CD4-positive, alpha-beta T cell (primary cell): ENCODE measurements at regions of chr1 and their contacts with region 1.

Region 1: GRCh38 chr1:40338745-40339424 is 21.8 kb upstream of the COL9A2 start:
- DNase-seq: peak; percentile 83 to 94 (median 89)
- ATAC-seq: peak; percentile 99
- H3K4me3 ChIP-seq: peak overlapping the region; percentile 18
- H3K4me3 Mint-ChIP-seq: peak overlapping the region; percentile 2
- H3K27ac ChIP-seq: no peak overlapping the region
- H3K27ac Mint-ChIP-seq: no peak overlapping the region
- H3K4me1 ChIP-seq: peaks cover 27% of the 10 kb centered on the region
- H3K4me1 Mint-ChIP-seq: peaks cover 44% of the 10 kb centered on the region
- H3K27me3 ChIP-seq: no peaks in the 10 kb centered on the region
- H3K27me3 Mint-ChIP-seq: no peaks in the 10 kb centered on the region
- CTCF ChIP-seq: peak; percentile 90

Region 2: DNA sequence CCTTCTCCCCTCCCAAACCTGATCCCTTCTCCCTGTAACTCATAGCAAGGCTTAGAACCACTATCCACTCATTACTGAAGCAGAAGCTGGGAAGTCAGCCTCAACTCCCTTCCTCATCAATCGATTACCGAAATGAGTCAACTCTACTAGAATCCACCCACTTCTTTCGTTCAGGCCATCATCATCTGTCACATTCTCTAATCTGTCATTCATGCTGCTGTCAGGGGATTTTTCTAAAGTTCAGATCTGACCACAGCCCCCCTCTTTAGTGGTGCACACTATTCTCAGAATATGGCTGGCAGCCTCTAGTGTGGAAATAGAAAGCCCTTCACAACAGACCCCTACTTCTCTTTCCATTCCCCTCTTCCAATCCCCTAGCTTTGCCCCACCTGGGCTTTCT is 672.1 kb before region 1 on chr1:
- CTCF ChIA-PET with region 1: no interaction called
- POLR2A ChIA-PET with region 1: no interaction called
- intact Hi-C with region 1: no loop called
- DNase-seq: no peak
- ATAC-seq: no peak
- H3K4me3 ChIP-seq: no peak overlapping the region
- H3K4me3 Mint-ChIP-seq: no peak overlapping the region
- H3K27ac ChIP-seq: no peak overlapping the region
- H3K27ac Mint-ChIP-seq: no peak overlapping the region
- H3K4me1 ChIP-seq: peaks cover 10% of the 10 kb centered on the region
- H3K4me1 Mint-ChIP-seq: peaks cover 8% of the 10 kb centered on the region
- H3K27me3 ChIP-seq: peaks cover 32 to 35% of the 10 kb centered on the region in 2 experiments
- H3K27me3 Mint-ChIP-seq: peaks cover 31% of the 10 kb centered on the region
- CTCF ChIP-seq: no peak

Region 3: DNA sequence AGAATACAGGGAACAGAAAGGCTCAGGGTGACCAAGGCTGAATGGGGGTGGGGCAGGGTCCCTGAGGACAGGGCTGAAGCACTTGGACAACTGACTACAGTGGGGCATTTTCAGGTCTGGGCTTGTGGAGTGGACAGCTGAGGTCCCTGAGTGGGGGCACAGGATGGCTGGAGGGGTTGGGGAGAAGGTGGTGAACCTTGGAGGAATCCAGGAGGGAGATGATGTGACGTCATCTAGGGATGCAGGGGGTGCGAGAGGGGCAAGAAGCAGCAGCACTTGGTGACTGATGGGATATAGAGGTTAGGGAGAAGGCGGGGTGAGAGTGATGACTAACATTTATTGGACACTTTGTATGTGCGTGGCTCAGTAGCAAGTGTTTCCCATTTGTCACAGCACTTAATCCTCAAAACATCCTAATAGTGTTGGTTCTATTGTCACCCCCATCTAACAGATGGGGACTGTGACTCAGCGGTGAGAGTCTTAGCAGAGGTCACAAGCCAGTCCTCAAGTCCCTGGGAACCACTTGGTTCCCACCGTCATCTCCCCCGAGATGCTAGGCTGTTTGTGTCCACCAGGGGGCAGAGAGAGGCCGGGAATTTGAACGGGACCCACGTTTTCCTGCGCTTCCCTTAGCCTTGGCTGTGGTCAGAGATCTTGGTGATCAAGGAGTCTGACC is 522.3 kb before region 1 on chr1:
- CTCF ChIA-PET with region 1: no interaction called
- POLR2A ChIA-PET with region 1: no interaction called
- intact Hi-C with region 1: loop called in 1 of 2 experiments (anchors 2 kb)
- DNase-seq: peak; percentile 17 to 84 (median 50)
- ATAC-seq: peak; percentile 63
- H3K4me3 ChIP-seq: peak overlapping the region; percentile 33
- H3K4me3 Mint-ChIP-seq: peak overlapping the region; percentile 42
- H3K27ac ChIP-seq: no peak overlapping the region
- H3K27ac Mint-ChIP-seq: no peak overlapping the region
- H3K4me1 ChIP-seq: peaks cover 15% of the 10 kb centered on the region
- H3K4me1 Mint-ChIP-seq: peaks cover 9% of the 10 kb centered on the region
- H3K27me3 ChIP-seq: peaks cover 0 to 6% of the 10 kb centered on the region in 2 experiments
- H3K27me3 Mint-ChIP-seq: peaks cover 20% of the 10 kb centered on the region
- CTCF ChIP-seq: peak; percentile 74

Region 4: DNA sequence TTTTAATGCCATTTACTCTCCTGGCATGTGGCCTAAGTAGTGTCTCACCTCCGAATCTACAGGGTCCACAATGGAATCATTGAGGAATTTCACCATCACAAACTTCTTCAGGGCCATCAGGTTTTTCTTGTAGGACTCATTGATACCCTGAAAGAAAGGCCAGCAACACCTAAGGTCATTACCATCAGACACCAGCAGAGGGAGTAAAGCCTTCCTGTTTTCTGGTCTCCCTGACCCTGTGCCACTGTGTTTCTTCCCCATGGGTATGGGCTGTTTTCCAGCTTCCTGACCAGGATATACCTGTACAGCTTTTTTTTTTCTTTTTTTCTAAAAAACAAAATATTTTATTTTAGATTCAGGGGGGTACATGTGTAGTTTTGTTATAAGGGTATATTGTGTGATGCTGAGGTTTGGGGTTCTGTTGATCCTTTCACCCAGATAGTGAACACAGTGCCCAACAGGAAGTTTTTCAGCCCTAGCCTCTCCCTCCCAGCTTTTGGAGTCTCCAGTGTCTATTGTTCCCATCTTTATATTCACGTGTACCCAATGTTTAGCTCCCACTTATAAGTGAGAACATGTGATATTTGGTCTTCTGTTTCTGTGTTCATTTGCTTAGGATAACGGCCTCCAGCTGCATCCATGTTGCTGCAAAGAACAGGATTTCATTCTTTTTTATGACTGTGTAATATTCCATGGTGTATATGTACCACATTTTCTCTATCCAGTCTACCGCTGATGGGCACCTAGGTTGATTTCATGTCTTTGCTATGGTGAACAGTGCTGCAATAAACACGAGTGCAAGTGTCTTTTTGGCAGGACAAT is 260.2 kb before region 1 on chr1:
- CTCF ChIA-PET with region 1: interaction called, 12 read pairs
- POLR2A ChIA-PET with region 1: no interaction called
- intact Hi-C with region 1: loop called (anchors 2 to 5 kb)
- DNase-seq: peak in 9 of 14 experiments; percentile 16 to 80 (median 28)
- ATAC-seq: peak; percentile 92
- H3K4me3 ChIP-seq: no peak overlapping the region
- H3K4me3 Mint-ChIP-seq: no peak overlapping the region
- H3K27ac ChIP-seq: no peak overlapping the region
- H3K27ac Mint-ChIP-seq: peak overlapping the region; percentile 30
- H3K4me1 ChIP-seq: no peaks in the 10 kb centered on the region
- H3K4me1 Mint-ChIP-seq: peaks cover 18% of the 10 kb centered on the region
- H3K27me3 ChIP-seq: no peaks in the 10 kb centered on the region
- H3K27me3 Mint-ChIP-seq: no peaks in the 10 kb centered on the region
- CTCF ChIP-seq: peak; percentile 84

Region 5: GRCh38 chr1:40153073-40153770 is 185.7 kb before region 1 on chr1:
- CTCF ChIA-PET with region 1: interaction called, 55 read pairs
- POLR2A ChIA-PET with region 1: interaction called, 13 read pairs
- intact Hi-C with region 1: loop called (anchors 1 kb)
- DNase-seq: peak in 8 of 14 experiments; percentile 5 to 83 (median 36)
- ATAC-seq: peak; percentile 76
- H3K4me3 ChIP-seq: no peak overlapping the region
- H3K4me3 Mint-ChIP-seq: peak overlapping the region; percentile 2
- H3K27ac ChIP-seq: no peak overlapping the region
- H3K27ac Mint-ChIP-seq: peak overlapping the region; percentile 12
- H3K4me1 ChIP-seq: no peaks in the 10 kb centered on the region
- H3K4me1 Mint-ChIP-seq: peaks cover 7% of the 10 kb centered on the region
- H3K27me3 ChIP-seq: no peaks in the 10 kb centered on the region
- H3K27me3 Mint-ChIP-seq: no peaks in the 10 kb centered on the region
- CTCF ChIP-seq: peak; percentile 78

Region 6: GRCh38 chr1:40167317-40167716 is 171.6 kb before region 1 on chr1:
- CTCF ChIA-PET with region 1: no interaction called
- POLR2A ChIA-PET with region 1: no interaction called
- intact Hi-C with region 1: no loop called
- DNase-seq: no peak
- ATAC-seq: no peak
- H3K4me3 ChIP-seq: no peak overlapping the region
- H3K4me3 Mint-ChIP-seq: peak overlapping the region; percentile 4
- H3K27ac ChIP-seq: no peak overlapping the region
- H3K27ac Mint-ChIP-seq: no peak overlapping the region
- H3K4me1 ChIP-seq: peaks cover 25% of the 10 kb centered on the region
- H3K4me1 Mint-ChIP-seq: peaks cover 31% of the 10 kb centered on the region
- H3K27me3 ChIP-seq: no peaks in the 10 kb centered on the region
- H3K27me3 Mint-ChIP-seq: no peaks in the 10 kb centered on the region
- CTCF ChIP-seq: no peak

Region 7: GRCh38 chr1:40315239-40315794 is 23.6 kb before region 1 on chr1:
- CTCF ChIA-PET with region 1: interaction called, 27 read pairs
- POLR2A ChIA-PET with region 1: interaction called, 4 read pairs
- intact Hi-C with region 1: no loop called
- DNase-seq: peak; percentile 78 to 94 (median 84)
- ATAC-seq: peak; percentile 84
- H3K4me3 ChIP-seq: peak overlapping the region; percentile 77
- H3K4me3 Mint-ChIP-seq: peak overlapping the region; percentile 90
- H3K27ac ChIP-seq: no peak overlapping the region
- H3K27ac Mint-ChIP-seq: peak overlapping the region; percentile 64
- H3K4me1 ChIP-seq: peaks cover 51% of the 10 kb centered on the region
- H3K4me1 Mint-ChIP-seq: peaks cover 37% of the 10 kb centered on the region
- H3K27me3 ChIP-seq: peaks cover 0 to 11% of the 10 kb centered on the region in 2 experiments
- H3K27me3 Mint-ChIP-seq: peaks cover 24% of the 10 kb centered on the region
- CTCF ChIP-seq: peak; percentile 79

Region 8: GRCh38 chr1:40404670-40405462 is 66.0 kb after region 1 on chr1:
- CTCF ChIA-PET with region 1: interaction called, 53 read pairs
- POLR2A ChIA-PET with region 1: interaction called, 18 read pairs
- intact Hi-C with region 1: loop called (anchors 1 kb)
- DNase-seq: peak in 7 of 14 experiments; percentile 25 to 86 (median 65)
- ATAC-seq: peak; percentile 81
- H3K4me3 ChIP-seq: no peak overlapping the region
- H3K4me3 Mint-ChIP-seq: peak overlapping the region; percentile 50
- H3K27ac ChIP-seq: peak overlapping the region; percentile 33 to 48
- H3K27ac Mint-ChIP-seq: peak overlapping the region; percentile 86
- H3K4me1 ChIP-seq: peaks cover 47% of the 10 kb centered on the region
- H3K4me1 Mint-ChIP-seq: peaks cover 63% of the 10 kb centered on the region
- H3K27me3 ChIP-seq: no peaks in the 10 kb centered on the region
- H3K27me3 Mint-ChIP-seq: no peaks in the 10 kb centered on the region
- CTCF ChIP-seq: peak; percentile 94

Region 9: DNA sequence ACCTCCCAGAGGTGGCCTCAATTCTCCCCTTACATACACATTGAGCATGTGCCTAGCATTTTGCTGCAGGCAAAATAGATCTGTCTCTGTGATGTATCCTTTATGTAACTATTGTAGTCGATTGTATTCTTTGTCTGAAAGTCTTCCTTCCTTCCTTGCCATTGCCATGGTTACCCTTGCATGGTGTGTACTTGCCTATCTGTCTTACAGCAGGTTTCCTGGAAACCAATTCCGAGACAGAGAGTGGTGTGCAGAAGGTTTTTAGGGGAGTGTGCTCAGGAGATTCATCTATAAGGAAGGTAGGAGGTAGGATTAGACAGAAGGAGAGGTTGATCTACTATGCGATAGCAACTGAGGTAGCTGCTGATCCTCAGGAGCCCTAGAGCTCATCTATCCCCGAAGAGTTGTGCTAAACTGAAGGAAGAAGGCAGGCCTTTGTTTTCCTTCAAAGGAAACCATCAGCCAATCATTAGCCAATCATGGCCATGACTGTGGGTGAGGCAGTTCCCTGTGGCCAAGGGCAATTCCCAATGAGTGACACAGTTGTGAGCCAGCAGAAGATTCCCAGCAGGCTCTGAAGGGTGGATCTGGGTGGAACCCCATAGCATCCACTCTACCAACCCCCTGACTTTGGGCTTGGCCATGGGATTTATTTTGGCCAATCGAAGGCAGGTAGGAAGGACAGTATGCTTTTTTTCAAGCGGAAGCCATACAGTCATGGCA is 508.3 kb after region 1 on chr1:
- CTCF ChIA-PET with region 1: no interaction called
- POLR2A ChIA-PET with region 1: no interaction called
- intact Hi-C with region 1: no loop called
- DNase-seq: no peak
- ATAC-seq: no peak
- H3K4me3 ChIP-seq: no peak overlapping the region
- H3K4me3 Mint-ChIP-seq: no peak overlapping the region
- H3K27ac ChIP-seq: no peak overlapping the region
- H3K27ac Mint-ChIP-seq: no peak overlapping the region
- H3K4me1 ChIP-seq: peaks cover 7% of the 10 kb centered on the region
- H3K4me1 Mint-ChIP-seq: peaks cover 23% of the 10 kb centered on the region
- H3K27me3 ChIP-seq: no peaks in the 10 kb centered on the region
- H3K27me3 Mint-ChIP-seq: no peaks in the 10 kb centered on the region
- CTCF ChIP-seq: no peak